K562 (cell line): ENCODE measurements at regions of chr1 and their contacts with region 1.

Region 1: DNA sequence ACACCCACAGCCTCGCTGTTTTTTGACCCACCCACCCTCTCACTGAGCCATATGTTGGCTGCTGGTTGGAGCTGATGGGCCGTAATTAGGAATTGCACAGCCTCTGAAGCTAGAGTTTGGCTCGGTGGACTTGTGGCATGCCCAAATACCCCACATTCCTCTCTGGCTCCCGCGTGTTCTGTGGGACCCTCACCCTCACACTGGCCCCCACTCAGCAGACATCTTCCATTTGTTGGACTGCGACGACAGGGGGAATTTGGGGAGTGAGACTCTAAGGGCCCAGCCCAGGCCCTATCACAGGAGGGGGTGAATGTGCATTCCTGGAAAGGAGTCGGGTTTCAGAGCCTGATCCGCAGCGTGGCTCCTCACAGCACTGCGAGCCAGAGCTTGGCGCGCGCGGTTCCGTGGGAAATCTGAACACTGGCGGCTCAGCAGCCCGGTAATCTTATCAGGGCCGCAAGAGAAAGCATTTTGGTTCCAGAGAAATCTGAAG is 5.2 kb downstream of the RCSD1 start:
- DNase-seq: peak; percentile 64 to 93 (median 78)
- ATAC-seq: peak; percentile 82
- H3K4me3 ChIP-seq: peak overlapping the region; percentile 11; the same call in 1 of the 2 replicates
- H3K27ac ChIP-seq: peak overlapping the region; percentile 69
- H3K4me1 ChIP-seq: peaks cover 34 to 56% of the 10 kb centered on the region in 2 experiments
- H3K27me3 ChIP-seq: no peaks in the 10 kb centered on the region
- CTCF ChIP-seq: no peak
- EP300 ChIP-seq: 0 out of 2 replicates have a peak, but pooled peaks have one; percentile 28
- POLR2A ChIP-seq: peak; percentile 56; the same call in 1 of the 2 replicates
- RAD21 ChIP-seq: peak in 1 of 2 experiments; percentile 23; a peak in 1 of 4 replicates

Region 2: DNA sequence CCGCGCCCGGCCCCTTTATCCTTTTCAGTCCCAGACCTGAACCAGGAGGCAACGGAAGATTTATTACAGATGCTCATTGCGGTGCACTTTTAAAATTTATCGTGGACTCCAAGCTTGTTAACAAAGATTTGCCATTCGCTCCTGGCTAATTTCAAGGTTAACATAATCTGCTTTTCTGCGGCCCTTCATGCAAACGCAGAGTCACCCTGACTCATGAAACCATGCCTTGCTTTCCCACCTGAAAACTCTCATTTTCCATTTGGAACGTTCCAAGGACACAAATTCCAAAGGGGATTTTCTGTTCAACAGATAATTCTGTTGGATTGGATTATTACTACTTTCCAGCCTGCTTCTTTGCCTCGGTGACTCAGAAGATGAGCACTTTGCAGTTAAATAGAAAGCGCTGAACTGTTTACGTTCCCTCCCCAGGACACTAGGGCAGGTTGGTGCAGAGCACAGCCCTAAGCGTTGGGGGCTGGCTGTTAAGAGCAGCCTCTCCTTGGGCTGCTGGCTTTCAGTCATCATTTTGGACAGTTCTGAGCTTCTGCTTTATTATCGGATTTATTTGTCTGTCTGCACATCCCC is 168.0 kb before region 1 on chr1:
- CTCF ChIA-PET with region 1: no interaction called
- POLR2A ChIA-PET with region 1: no interaction called
- in situ Hi-C with region 1: no loop called
- intact Hi-C with region 1: no loop called
- DNase-seq: no peak
- ATAC-seq: peak; percentile 69
- H3K4me3 ChIP-seq: no peak overlapping the region
- H3K27ac ChIP-seq: no peak overlapping the region; the same call in 2 of the 3 replicates
- H3K4me1 ChIP-seq: peaks cover 0 to 4% of the 10 kb centered on the region in 2 experiments; a peak in 2 of 5 replicates
- H3K27me3 ChIP-seq: peaks cover 6 to 25% of the 10 kb centered on the region in 2 experiments; a peak in 4 of 5 replicates
- CTCF ChIP-seq: no peak
- EP300 ChIP-seq: no peak
- POLR2A ChIP-seq: no peak
- RAD21 ChIP-seq: no peak

Region 3: DNA sequence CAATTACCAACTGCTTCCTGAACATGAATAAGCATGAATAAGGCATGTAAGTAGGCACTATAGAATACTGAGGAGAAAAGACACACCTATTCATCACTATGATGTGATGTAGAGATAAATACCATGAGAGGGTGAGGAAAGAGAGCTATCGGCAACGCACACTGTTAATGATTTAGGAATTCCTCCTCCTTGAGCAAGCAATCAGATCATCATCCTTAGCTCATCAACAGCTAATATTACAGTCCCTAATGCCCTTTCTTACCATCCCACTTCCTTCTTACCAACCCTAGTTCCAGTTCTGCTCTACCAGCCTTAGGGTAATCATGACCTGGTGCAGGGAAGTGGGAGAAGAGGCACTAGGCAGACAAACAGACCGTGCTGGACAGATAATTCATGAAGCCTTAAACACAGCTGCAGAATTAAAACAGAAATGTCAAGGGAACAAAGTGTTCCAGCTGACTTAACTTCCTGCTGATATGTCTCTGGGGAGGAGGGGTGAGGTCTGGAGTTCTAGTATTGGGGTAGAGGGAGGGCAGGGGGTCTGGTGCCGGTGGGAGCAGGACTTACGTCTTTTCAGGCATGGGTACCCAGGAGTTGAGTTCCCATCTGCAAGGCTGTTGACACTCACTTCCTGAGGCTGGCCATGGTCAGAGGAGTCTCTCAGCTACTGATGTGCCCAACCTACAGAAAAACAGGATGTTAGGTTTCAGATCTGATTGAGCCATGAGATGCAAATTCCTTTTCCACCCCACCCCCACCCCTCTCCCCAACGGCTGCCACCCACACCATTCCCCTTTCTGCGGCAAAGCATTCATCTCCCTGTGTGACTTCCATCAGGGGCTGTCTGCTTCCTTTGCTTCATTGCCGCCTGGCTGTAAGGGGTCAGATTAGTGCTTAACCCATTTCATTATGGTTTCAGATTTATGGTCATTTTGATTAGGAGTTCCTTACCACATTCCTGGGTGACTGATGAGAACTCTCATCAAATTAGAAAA is 17.8 kb before region 1 on chr1:
- CTCF ChIA-PET with region 1: no interaction called
- POLR2A ChIA-PET with region 1: interaction called, 7 read pairs
- in situ Hi-C with region 1: no loop called
- intact Hi-C with region 1: loop called (anchors 2 kb)
- DNase-seq: peak; percentile 53 to 78 (median 68)
- ATAC-seq: peak; percentile 86
- H3K4me3 ChIP-seq: peak overlapping the region; percentile 23
- H3K27ac ChIP-seq: peak overlapping the region; percentile 81
- H3K4me1 ChIP-seq: peaks cover 16 to 40% of the 10 kb centered on the region in 2 experiments
- H3K27me3 ChIP-seq: no peaks in the 10 kb centered on the region
- CTCF ChIP-seq: no peak
- EP300 ChIP-seq: peak; percentile 84
- POLR2A ChIP-seq: peak; percentile 56
- RAD21 ChIP-seq: no peak; a peak in 1 of 4 replicates

Region 4: GRCh38 chr1:167650269-167651160 is 15.3 kb after region 1 on chr1:
- CTCF ChIA-PET with region 1: no interaction called
- POLR2A ChIA-PET with region 1: interaction called, 93 read pairs
- in situ Hi-C with region 1: no loop called
- intact Hi-C with region 1: no loop called
- DNase-seq: no peak
- ATAC-seq: peak; percentile 55
- H3K4me3 ChIP-seq: no peak overlapping the region
- H3K27ac ChIP-seq: no peak overlapping the region
- H3K4me1 ChIP-seq: peaks cover 9 to 10% of the 10 kb centered on the region in 2 experiments; a peak in 4 of 5 replicates
- H3K27me3 ChIP-seq: no peaks in the 10 kb centered on the region
- CTCF ChIP-seq: no peak
- EP300 ChIP-seq: no peak
- POLR2A ChIP-seq: no peak
- RAD21 ChIP-seq: no peak

Region 5: DNA sequence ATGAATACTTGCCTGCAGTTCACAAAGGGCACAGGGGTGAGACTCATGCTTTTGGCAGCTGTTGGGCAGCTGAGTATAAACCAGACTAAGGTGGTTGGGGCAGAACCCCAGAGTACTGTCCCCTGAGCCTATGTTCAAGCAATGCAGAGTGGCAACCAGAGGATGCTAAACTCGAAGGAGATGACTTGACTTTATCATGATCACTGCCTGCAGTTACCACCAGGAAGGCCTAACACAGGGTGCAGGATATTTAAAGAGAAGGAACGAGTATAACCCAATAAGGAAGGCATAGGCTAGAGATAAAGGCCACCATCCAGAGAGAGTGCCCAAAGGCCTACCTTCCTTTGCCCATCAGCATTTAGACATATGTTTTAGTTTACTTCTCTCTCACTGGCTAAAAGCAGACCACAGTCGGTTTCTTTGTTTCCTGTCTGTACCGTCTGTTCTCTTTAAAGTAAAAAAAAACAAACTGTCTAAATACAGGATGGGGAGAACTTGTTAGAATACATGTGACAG is 169.9 kb after region 1 on chr1:
- CTCF ChIA-PET with region 1: no interaction called
- POLR2A ChIA-PET with region 1: no interaction called
- in situ Hi-C with region 1: no loop called
- intact Hi-C with region 1: no loop called
- DNase-seq: no peak
- ATAC-seq: no peak
- H3K4me3 ChIP-seq: no peak overlapping the region
- H3K27ac ChIP-seq: no peak overlapping the region
- H3K4me1 ChIP-seq: peaks cover 0 to 7% of the 10 kb centered on the region in 2 experiments; a peak in 4 of 5 replicates
- H3K27me3 ChIP-seq: no peaks in the 10 kb centered on the region
- CTCF ChIP-seq: no peak
- EP300 ChIP-seq: no peak
- POLR2A ChIP-seq: no peak
- RAD21 ChIP-seq: no peak